Vagina (tissue), 2 donors: ENCODE measurements at regions of chr10 and their contacts with region 1.

Region 1: DNA sequence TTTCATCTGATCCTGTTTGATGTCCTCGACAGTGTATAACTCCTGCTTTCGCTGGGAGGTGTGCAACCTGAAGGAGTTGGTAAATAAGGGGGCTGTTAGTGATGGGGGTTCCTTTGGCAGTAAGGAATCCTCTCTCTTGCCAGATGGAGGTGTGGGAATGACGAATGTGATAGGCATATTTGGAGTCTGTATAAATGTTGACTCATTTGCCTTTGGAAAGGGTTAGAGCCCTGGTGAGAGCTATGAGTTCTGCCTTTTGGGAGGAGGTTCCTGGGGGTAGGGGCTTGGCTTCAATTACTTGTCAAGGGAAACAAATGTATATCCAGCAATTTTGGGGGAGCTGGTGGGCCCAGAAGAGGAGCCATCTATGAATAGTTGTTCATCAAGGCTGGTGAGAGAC is 11.4 kb upstream of the CHST3 start:
- DNase-seq: no peak
- H3K4me3 ChIP-seq: no peak overlapping the region
- H3K27ac ChIP-seq: no peak overlapping the region
- H3K4me1 ChIP-seq: peaks cover 7% of the 10 kb centered on the region
- H3K27me3 ChIP-seq: no peaks in the 10 kb centered on the region
- CTCF ChIP-seq: no peak
- POLR2A ChIP-seq: no peak

Region 2: GRCh38 chr10:72048450-72049124 is 95.8 kb after region 1 on chr10:
- intact Hi-C with region 1: loop called (anchors 5 kb)
- DNase-seq: peak in 1 of 2 donors; percentile 94
- H3K4me3 ChIP-seq: no peak overlapping the region
- H3K27ac ChIP-seq: no peak overlapping the region
- H3K4me1 ChIP-seq: peaks cover 5% of the 10 kb centered on the region
- H3K27me3 ChIP-seq: no peaks in the 10 kb centered on the region
- CTCF ChIP-seq: peak; percentile 96 to 100 (median 100)
- POLR2A ChIP-seq: no peak